ENCODE measurements at regions of chr5 and their contacts with region 1.

Region 1: GRCh38 chr5:72955768-72956323 is at the start of gene FCHO2:
- DNase-seq: peak; percentile 97
- H3K4me3 ChIP-seq: peak within 1 kb of the TSS; percentile 53 to 82 (median 77)
- H3K27ac ChIP-seq: peak within 1 kb of the TSS; percentile 98
- H3K4me1 ChIP-seq: peaks cover 24% of the 10 kb centered on the region
- H3K27me3 ChIP-seq: no peaks in the 10 kb centered on the region
- CTCF ChIP-seq: peak; percentile 58 to 85
- total RNA-seq, gene FCHO2: 15.5 to 25.5 TPM

Region 2: GRCh38 chr5:72744136-72744535 is 211.7 kb before region 1 on chr5:
- CTCF ChIA-PET with region 1: no interaction called
- dilution Hi-C with region 1: no loop called
- in situ Hi-C with region 1: no loop called
- intact Hi-C with region 1: no loop called
- DNase-seq: no peak
- H3K4me3 ChIP-seq: no peak overlapping the region
- H3K27ac ChIP-seq: no peak overlapping the region
- H3K4me1 ChIP-seq: no peaks in the 10 kb centered on the region
- H3K27me3 ChIP-seq: no peaks in the 10 kb centered on the region
- CTCF ChIP-seq: no peak

Region 3: GRCh38 chr5:72920690-72921502 is 35.0 kb before region 1 on chr5:
- CTCF ChIA-PET with region 1: no interaction called
- dilution Hi-C with region 1: no loop called
- in situ Hi-C with region 1: no loop called
- intact Hi-C with region 1: loop called (anchors 1 kb)
- DNase-seq: peak; percentile 26
- H3K4me3 ChIP-seq: no peak overlapping the region
- H3K27ac ChIP-seq: no peak overlapping the region
- H3K4me1 ChIP-seq: no peaks in the 10 kb centered on the region
- H3K27me3 ChIP-seq: no peaks in the 10 kb centered on the region
- CTCF ChIP-seq: peak; percentile 29 to 48

Region 4: DNA sequence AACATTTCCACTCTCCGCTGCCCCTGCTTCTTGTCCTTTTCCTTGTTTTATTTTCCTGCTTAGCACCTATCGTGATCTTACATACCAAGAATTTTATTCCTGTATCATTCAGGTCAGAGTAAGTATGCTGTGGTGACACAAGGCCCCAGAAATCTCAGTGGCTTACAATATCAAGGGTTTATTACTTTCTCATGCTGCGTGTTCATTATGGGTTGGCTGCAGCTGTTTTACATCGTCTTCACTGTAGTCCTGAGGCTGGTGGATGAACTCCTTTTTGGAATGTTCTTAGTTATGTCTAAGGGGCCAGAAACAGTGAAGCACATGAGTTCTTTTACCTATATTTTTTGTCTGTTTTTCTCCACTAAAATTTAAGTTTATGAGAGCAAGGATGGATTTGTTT is 51.2 kb after region 1 on chr5:
- CTCF ChIA-PET with region 1: no interaction called
- dilution Hi-C with region 1: no loop called
- in situ Hi-C with region 1: no loop called
- intact Hi-C with region 1: no loop called
- DNase-seq: no peak
- H3K4me3 ChIP-seq: no peak overlapping the region
- H3K27ac ChIP-seq: no peak overlapping the region
- H3K4me1 ChIP-seq: no peaks in the 10 kb centered on the region
- H3K27me3 ChIP-seq: no peaks in the 10 kb centered on the region
- CTCF ChIP-seq: no peak

Region 5: DNA sequence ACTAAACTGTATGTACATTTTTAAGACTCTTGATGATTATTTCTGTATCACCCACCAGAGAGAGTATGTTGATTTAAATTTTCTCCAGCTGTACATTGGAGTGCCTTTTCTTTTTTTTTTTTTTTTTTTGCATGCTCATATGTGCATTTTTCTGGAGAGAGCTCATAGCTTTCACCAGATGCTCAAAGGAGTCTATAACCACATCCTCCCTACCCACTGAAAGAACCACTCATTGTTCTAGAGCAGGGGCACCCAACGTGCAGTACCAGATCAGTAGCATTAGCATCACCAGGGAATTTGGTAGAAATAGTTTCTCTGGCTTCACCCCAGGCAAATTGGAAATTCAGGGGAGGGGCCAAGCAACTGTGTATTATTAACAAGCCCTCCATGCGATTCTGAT is 110.6 kb after region 1 on chr5:
- CTCF ChIA-PET with region 1: no interaction called
- dilution Hi-C with region 1: no loop called
- in situ Hi-C with region 1: no loop called
- intact Hi-C with region 1: loop called (anchors 2 kb)
- DNase-seq: peak; percentile 78
- H3K4me3 ChIP-seq: no peak overlapping the region
- H3K27ac ChIP-seq: no peak overlapping the region
- H3K4me1 ChIP-seq: peaks cover 3% of the 10 kb centered on the region
- H3K27me3 ChIP-seq: no peaks in the 10 kb centered on the region
- CTCF ChIP-seq: no peak

Region 6: GRCh38 chr5:73201547-73202513 is 246.0 kb after region 1 on chr5:
- CTCF ChIA-PET with region 1: no interaction called
- dilution Hi-C with region 1: no loop called
- in situ Hi-C with region 1: no loop called
- intact Hi-C with region 1: loop called (anchors 5 kb)
- DNase-seq: peak; percentile 49
- H3K4me3 ChIP-seq: peak overlapping the region in 1 of 3 experiments; percentile 29
- H3K27ac ChIP-seq: no peak overlapping the region
- H3K4me1 ChIP-seq: peaks cover 5% of the 10 kb centered on the region
- H3K27me3 ChIP-seq: peaks cover 3% of the 10 kb centered on the region
- CTCF ChIP-seq: peak; percentile 45 to 94

Region 7: DNA sequence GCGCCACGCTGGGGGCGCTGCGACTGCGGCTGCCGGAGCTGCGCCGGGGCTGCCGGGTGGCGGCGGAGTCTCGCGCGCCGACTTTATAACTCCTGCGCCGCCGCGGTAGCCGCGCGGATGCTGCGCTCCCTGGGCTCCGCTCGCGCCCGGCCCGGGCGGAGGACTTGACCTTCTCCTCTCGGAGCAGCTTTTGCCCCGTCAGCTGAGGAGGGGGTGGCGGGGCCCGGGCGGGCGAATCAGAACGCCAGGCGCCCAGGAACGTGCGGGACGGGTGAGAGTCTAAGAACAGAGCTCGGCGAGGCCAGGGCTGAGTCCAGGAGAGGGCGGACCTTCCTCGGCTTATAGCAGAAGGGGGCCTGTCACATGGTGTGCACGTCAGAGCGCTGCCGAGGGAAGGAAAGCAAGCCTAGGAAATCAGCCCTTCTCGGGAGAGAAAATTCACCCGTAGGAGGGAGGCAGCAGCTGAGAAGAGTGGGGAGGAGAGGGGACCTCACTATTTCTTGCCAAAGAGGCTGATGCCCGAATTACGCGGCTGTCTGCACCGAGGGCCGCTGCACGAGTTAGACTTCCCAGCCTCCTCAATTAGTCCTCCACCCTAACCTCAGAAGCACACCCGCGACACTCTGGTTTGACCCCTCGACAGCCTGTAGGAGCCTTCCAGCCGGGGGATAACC is 492.8 kb after region 1 on chr5 and contains the start of gene FOXD1:
- CTCF ChIA-PET with region 1: no interaction called
- dilution Hi-C with region 1: no loop called
- in situ Hi-C with region 1: no loop called
- intact Hi-C with region 1: loop called (anchors 2 kb)
- DNase-seq: peak; percentile 94
- H3K4me3 ChIP-seq: peak within 1 kb of the TSS; percentile 56 to 67 (median 59)
- H3K27ac ChIP-seq: peak within 1 kb of the TSS; percentile 39
- H3K4me1 ChIP-seq: peaks cover 29% of the 10 kb centered on the region
- H3K27me3 ChIP-seq: peaks cover 14% of the 10 kb centered on the region
- CTCF ChIP-seq: no peak
- total RNA-seq, gene FOXD1: 1.2 to 58.1 TPM

Measured in mammary epithelial cell (primary cell).